Activated T-helper 1 cell treated with anti-CD3 and anti-CD28 coated beads, Interleukin-12 subunit alpha, Interleukin-12 subunit beta, Interleukin-2, Interleukin-4 antibody, amounts not matched to agents 30 ng/mL and 10 ng/mL and 1 ng/mL, durations not matched to agents 14 hours and 24 hours and 36 hours (primary cell): ENCODE measurements at regions of chr3 and their contacts with region 1.

Region 1: GRCh38 chr3:143119009-143119914 is at the start of gene CHST2:
- DNase-seq: peak; percentile 62
- H3K4me3 Mint-ChIP-seq: peak within 1 kb of the TSS; percentile 92
- H3K27ac Mint-ChIP-seq: peak within 1 kb of the TSS; percentile 74
- H3K4me1 Mint-ChIP-seq: peaks cover 35% of the 10 kb centered on the region
- H3K27me3 Mint-ChIP-seq: peaks cover 10% of the 10 kb centered on the region
- total RNA-seq, gene CHST2: 11.3 and 11.4 TPM in 2 replicates

Region 2: GRCh38 chr3:143001369-143002082 is 117.7 kb before region 1 on chr3 and contains the start of gene U2SURP:
- intact Hi-C with region 1: loop called (anchors 1 kb)
- DNase-seq: peak; percentile 91
- H3K4me3 Mint-ChIP-seq: peak within 1 kb of the TSS; percentile 95
- H3K27ac Mint-ChIP-seq: peak within 1 kb of the TSS; percentile 96
- H3K4me1 Mint-ChIP-seq: peaks cover 45% of the 10 kb centered on the region
- H3K27me3 Mint-ChIP-seq: peaks cover 6% of the 10 kb centered on the region
- total RNA-seq, gene U2SURP: 186 and 205 TPM in 2 replicates

Region 3: DNA sequence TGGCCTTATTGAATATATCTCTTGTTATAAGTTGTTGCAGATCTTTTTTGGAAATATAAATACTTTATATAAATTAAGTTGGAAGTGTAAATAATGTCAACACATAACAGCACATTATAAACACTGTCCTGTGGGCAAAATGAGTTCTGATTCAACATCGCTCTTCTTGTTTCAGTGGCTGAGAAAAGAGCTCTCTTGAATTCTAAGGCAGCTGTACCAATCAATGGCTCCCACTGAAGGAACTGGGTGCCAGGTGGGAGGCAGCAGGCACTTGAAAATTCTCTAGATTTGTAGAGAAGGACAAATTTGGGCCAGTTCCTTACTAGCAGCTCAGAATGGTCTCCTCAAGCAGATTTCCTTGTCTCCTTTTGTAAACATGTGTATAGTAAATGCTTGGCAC is 45.9 kb after region 1 on chr3:
- intact Hi-C with region 1: loop called (anchors 1 kb)
- DNase-seq: no peak
- H3K4me3 Mint-ChIP-seq: peak overlapping the region; percentile 52
- H3K27ac Mint-ChIP-seq: peak overlapping the region; percentile 87
- H3K4me1 Mint-ChIP-seq: peaks cover 71% of the 10 kb centered on the region
- H3K27me3 Mint-ChIP-seq: peaks cover 2% of the 10 kb centered on the region

Region 4: GRCh38 chr3:143192193-143192592 is 72.9 kb after region 1 on chr3:
- intact Hi-C with region 1: no loop called
- DNase-seq: no peak
- H3K4me3 Mint-ChIP-seq: no peak overlapping the region
- H3K27ac Mint-ChIP-seq: no peak overlapping the region
- H3K4me1 Mint-ChIP-seq: peaks cover 20% of the 10 kb centered on the region
- H3K27me3 Mint-ChIP-seq: peaks cover 2% of the 10 kb centered on the region

Region 5: DNA sequence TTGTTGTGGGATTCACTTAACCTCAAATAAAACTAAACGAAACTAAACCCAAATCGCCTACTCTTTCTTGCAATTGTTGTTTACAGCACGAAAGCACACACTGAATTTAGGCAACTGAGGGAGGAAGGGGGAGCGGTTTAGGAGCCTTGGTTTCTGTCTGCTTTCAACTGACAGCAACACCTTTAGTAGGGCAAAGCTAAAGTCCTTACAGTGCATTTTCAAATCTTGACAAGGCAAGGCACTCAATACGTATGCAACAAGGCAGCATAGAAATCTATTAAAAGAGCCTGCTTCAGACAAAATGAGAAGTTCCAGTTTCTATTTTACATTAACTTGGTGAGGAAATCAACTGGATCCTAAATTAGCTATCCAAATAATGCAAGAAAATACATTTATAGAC is 174.9 kb after region 1 on chr3:
- intact Hi-C with region 1: loop called (anchors 5 kb)
- DNase-seq: no peak
- H3K4me3 Mint-ChIP-seq: no peak overlapping the region
- H3K27ac Mint-ChIP-seq: no peak overlapping the region
- H3K4me1 Mint-ChIP-seq: peaks cover 29% of the 10 kb centered on the region
- H3K27me3 Mint-ChIP-seq: peaks cover 2% of the 10 kb centered on the region

Region 6: GRCh38 chr3:143443851-143444331 is 324.6 kb after region 1 on chr3:
- intact Hi-C with region 1: loop called (anchors 5 kb)
- DNase-seq: no peak
- H3K4me3 Mint-ChIP-seq: peak overlapping the region; percentile 3
- H3K27ac Mint-ChIP-seq: peak overlapping the region; percentile 15
- H3K4me1 Mint-ChIP-seq: peaks cover 21% of the 10 kb centered on the region
- H3K27me3 Mint-ChIP-seq: peaks cover 2% of the 10 kb centered on the region

Region 7: DNA sequence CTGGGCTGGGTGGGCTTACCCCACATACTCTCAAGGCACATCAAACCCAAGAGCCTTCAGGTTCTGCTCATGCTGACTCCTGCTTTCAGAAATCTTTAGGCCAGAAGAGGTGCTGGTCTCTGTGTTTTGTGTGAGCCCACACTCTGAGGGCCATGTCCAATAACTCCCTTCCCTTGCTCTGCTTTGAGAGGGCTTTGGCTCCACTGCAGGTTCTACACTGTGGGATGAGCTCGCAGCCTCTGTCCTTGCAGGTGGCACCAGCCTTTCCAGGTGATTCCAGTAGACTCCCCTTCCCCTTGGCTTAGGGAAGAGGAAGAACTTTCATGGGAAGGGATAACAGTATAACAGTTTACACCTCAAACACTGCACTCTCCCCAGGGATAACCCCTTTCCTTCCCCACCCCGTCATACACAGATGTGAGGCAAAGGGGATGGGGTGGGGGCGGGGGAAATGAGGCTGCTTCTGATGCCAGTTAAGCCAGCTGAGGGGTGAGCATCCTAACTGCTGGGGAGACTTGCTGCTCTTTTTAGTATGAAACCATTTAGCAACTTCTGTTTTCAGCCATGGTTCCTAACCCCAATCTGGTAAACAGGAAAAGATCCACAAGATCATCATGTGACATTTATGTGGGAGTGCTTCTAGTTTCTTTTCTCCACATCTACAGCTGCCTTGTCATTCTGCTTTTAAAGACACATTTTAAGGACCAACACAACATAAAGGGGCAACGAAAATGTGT is 466.6 kb after region 1 on chr3:
- intact Hi-C with region 1: loop called (anchors 1 kb)
- DNase-seq: no peak
- H3K4me3 Mint-ChIP-seq: no peak overlapping the region
- H3K27ac Mint-ChIP-seq: peak overlapping the region; percentile 20
- H3K4me1 Mint-ChIP-seq: peaks cover 21% of the 10 kb centered on the region
- H3K27me3 Mint-ChIP-seq: no peaks in the 10 kb centered on the region

Region 8: DNA sequence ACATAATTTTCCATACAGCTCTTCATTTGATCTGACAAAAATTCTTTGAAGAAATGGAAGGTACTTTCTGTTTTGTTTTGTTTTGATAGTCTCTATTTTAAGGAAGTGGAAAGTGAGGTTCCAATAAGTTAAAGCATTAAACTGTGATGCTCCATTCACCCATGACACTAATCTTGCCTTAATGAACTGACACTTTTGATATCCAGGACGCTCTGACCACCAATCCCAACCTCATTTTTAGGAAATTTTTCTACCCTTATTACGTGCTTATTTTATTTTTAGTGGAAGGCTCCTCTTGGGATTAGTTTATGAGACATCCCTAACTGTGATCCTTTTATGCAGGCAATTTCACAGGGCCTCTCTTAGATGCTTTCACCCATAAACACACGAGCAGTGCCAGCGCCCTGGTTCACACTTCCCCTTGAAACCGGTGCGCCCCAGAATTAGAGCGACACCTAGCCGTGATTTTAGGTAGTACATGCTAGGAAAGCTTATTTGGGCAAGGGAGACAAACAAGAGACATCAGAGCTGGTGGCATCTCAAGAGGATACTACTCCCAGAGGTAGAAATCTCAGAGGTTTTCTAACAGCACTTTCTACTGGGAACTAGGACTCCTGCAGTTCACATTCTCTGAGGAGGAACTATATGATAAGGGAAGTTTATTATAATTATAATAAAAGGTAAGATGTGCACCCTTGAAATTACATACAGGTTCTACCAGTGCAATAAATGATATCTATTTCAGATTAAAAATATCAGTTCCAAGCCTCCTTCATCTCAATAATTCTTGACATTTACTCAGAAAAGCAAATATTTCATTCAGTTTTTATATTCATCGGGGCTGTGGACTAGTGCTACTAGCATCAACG is 555.1 kb after region 1 on chr3:
- intact Hi-C with region 1: loop called (anchors 1 kb)
- DNase-seq: peak; percentile 64
- H3K4me3 Mint-ChIP-seq: no peak overlapping the region
- H3K27ac Mint-ChIP-seq: peak overlapping the region; percentile 11
- H3K4me1 Mint-ChIP-seq: peaks cover 7% of the 10 kb centered on the region
- H3K27me3 Mint-ChIP-seq: no peaks in the 10 kb centered on the region